ENCODE measurements at regions of chr13 and their contacts with region 1.

Region 1: GRCh38 chr13:102596147-102597028 is at the start of gene TPP2:
- DNase-seq: peak; percentile 100
- total RNA-seq, gene TPP2: 31.0 TPM

Region 2: GRCh38 chr13:102495663-102496062 is 100.7 kb before region 1 on chr13:
- intact Hi-C with region 1: no loop called
- DNase-seq: no peak

Region 3: DNA sequence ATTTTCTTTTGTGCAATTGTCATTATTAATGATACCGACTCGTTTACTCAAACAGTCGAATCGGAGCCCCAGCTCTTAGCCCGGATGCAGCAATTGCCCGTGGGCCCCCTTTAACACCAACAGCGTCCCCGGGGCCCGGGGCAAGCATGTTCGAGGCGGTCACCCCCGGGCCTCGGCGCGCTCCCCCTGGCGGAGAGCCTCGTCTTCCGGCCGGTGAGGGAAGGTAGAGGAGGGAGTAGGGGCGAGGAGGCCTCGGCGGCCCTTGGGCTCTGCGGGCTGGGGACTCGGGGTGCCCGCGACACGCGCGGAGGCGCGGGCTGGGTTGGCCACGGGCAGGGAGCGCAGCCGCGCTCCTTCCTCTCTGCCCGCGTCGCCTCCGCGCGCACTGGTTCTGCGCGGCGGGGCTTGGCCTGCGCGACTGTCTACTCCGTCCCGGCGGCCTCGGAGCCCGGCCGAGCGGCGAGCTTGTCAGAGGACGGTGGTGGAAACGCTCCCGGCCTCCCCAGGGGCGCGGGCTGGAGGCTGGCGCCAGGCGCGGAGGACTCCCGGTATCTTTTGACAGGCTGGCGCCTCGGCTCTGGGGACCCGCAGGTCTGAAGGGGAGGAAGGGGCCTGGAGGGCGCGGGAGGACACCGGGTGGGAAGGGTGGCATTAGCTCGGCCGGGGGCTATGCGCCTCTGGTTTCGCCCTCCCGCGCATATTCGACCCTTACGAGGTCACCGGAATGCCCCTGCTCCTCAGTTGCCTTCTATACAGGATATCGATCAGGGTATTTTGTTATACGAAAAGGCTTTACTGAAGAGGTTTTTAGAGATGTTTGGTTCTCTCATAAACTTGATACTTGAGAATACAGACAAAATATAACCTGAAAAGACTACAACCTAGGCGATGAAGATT is 204.0 kb after region 1 on chr13:
- intact Hi-C with region 1: loop called (anchors 2 kb)
- DNase-seq: peak; percentile 87

Measured in cardiac septum (tissue), 1 donor.